ENCODE measurements at regions of chr7 and their contacts with region 1.

Region 1: GRCh38 chr7:95686109-95686508 is 86.2 kb upstream of the DYNC1I1 start:
- DNase-seq: no peak
- ATAC-seq: peak; percentile 71 to 73
- H3K4me3 ChIP-seq: no peak overlapping the region
- H3K27ac ChIP-seq: no peak overlapping the region
- H3K4me1 ChIP-seq: peaks cover 5% of the 10 kb centered on the region
- H3K27me3 ChIP-seq: no peaks in the 10 kb centered on the region
- CTCF ChIP-seq: peak; percentile 48

Region 2: DNA sequence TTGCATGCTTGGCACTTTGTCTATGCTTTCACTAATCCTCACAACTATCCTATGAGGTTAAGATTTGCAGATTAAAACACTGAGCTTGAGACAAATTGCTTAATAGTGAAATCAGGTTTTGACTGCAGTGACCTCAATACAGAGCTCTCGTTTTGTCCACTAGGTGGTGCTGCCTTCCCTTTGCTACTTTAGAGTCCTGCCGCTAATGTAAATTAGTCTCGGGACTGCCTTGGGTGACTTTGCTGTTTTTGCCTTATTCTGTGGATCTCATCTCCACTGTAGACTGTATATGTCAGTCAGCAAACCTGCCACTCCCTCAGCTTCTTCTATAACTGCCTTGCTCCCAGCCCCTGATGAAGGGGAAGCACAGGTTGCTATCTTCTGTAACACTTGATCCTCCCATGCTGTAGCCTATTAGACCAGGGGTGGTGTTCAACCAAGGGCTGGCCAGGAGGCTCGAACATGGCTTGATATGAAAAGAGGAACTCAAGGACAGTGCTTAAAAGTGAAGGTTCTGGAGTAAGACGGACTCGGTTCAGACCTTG is 174.3 kb before region 1 on chr7:
- intact Hi-C with region 1: loop called (anchors 5 kb)
- DNase-seq: peak; percentile 45
- ATAC-seq: peak; percentile 92 to 93
- H3K4me3 ChIP-seq: no peak overlapping the region
- H3K27ac ChIP-seq: no peak overlapping the region
- H3K4me1 ChIP-seq: no peaks in the 10 kb centered on the region
- H3K27me3 ChIP-seq: no peaks in the 10 kb centered on the region
- CTCF ChIP-seq: peak; percentile 90

Region 3: GRCh38 chr7:95527033-95527775 is 158.9 kb before region 1 on chr7:
- intact Hi-C with region 1: loop called (anchors 5 kb)
- DNase-seq: no peak
- ATAC-seq: peak; percentile 85 to 90
- H3K4me3 ChIP-seq: no peak overlapping the region
- H3K27ac ChIP-seq: no peak overlapping the region
- H3K4me1 ChIP-seq: peaks cover 4% of the 10 kb centered on the region
- H3K27me3 ChIP-seq: no peaks in the 10 kb centered on the region
- CTCF ChIP-seq: peak; percentile 88

Region 4: GRCh38 chr7:95596198-95597063 is 89.7 kb before region 1 on chr7 and contains the start of gene PDK4:
- intact Hi-C with region 1: loop called (anchors 10 kb)
- DNase-seq: peak; percentile 96
- ATAC-seq: peak; percentile 98 to 99
- H3K4me3 ChIP-seq: peak within 1 kb of the TSS; percentile 85
- H3K27ac ChIP-seq: peak within 1 kb of the TSS; percentile 97
- H3K4me1 ChIP-seq: peaks cover 33% of the 10 kb centered on the region
- H3K27me3 ChIP-seq: no peaks in the 10 kb centered on the region
- CTCF ChIP-seq: no peak
- total RNA-seq, gene PDK4: 243 TPM

Region 5: DNA sequence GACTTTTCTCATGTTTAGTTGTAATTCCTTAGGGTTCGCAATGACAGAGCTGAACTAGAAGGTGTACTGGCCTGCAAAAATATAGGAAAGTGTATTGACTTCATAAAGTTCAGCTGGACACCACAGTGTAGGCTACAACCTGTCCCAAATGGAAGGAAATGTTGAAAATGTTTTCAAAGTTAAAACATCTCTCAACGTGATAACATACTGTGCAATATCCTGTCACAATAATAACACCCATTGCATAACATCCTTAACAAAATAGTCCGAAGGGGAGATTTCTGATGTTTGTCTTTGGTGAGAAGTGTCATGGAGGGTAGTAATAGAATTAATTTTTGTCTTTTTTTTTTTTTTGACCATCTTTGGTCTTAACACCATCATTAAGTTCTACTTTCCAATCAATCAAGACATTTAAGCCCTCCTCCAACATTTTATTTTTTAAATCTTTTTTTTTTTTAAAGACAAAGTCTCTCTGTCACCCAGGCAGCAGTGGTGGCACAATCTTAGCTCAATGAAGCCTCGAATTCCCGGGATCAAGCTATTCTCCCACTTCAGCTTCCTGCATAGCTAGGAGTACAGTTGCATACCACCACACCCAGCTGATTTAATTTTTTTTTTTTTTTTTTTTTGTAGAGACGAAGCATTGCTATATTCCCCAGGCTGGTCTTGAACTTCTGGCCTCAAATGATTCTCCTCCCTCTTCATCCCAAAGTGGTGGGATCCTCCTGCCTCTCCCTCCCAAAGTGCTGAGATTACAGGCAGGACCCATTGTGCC is 131.9 kb after region 1 on chr7:
- intact Hi-C with region 1: no loop called
- DNase-seq: no peak
- ATAC-seq: no peak
- H3K4me3 ChIP-seq: no peak overlapping the region
- H3K27ac ChIP-seq: no peak overlapping the region
- H3K4me1 ChIP-seq: no peaks in the 10 kb centered on the region
- H3K27me3 ChIP-seq: no peaks in the 10 kb centered on the region
- CTCF ChIP-seq: no peak

Region 6: GRCh38 chr7:96266580-96266979 is 580.5 kb after region 1 on chr7:
- intact Hi-C with region 1: no loop called
- DNase-seq: no peak
- ATAC-seq: no peak
- H3K4me3 ChIP-seq: no peak overlapping the region
- H3K27ac ChIP-seq: no peak overlapping the region
- H3K4me1 ChIP-seq: no peaks in the 10 kb centered on the region
- H3K27me3 ChIP-seq: no peaks in the 10 kb centered on the region
- CTCF ChIP-seq: no peak